ENCODE measurements at regions of chr5 and their contacts with region 1.

Region 1: GRCh38 chr5:14364576-14365472 is 216.8 kb upstream of the OTULINL start:
- DNase-seq: peak in 1 of 2 experiments; percentile 49
- H3K4me3 ChIP-seq: no peak overlapping the region
- H3K4me1 ChIP-seq: no peaks in the 10 kb centered on the region
- H3K27me3 ChIP-seq: no peaks in the 10 kb centered on the region

Region 2: GRCh38 chr5:13946115-13946514 is 418.7 kb before region 1 on chr5:
- in situ Hi-C with region 1: no loop called
- DNase-seq: no peak
- H3K4me3 ChIP-seq: no peak overlapping the region
- H3K4me1 ChIP-seq: no peaks in the 10 kb centered on the region
- H3K27me3 ChIP-seq: no peaks in the 10 kb centered on the region

Region 3: GRCh38 chr5:13987843-13988464 is 376.9 kb before region 1 on chr5:
- in situ Hi-C with region 1: loop called (anchors 10 kb)
- DNase-seq: peak; percentile 61 to 66
- H3K4me3 ChIP-seq: no peak overlapping the region
- H3K4me1 ChIP-seq: no peaks in the 10 kb centered on the region
- H3K27me3 ChIP-seq: peaks cover 13% of the 10 kb centered on the region

Region 4: DNA sequence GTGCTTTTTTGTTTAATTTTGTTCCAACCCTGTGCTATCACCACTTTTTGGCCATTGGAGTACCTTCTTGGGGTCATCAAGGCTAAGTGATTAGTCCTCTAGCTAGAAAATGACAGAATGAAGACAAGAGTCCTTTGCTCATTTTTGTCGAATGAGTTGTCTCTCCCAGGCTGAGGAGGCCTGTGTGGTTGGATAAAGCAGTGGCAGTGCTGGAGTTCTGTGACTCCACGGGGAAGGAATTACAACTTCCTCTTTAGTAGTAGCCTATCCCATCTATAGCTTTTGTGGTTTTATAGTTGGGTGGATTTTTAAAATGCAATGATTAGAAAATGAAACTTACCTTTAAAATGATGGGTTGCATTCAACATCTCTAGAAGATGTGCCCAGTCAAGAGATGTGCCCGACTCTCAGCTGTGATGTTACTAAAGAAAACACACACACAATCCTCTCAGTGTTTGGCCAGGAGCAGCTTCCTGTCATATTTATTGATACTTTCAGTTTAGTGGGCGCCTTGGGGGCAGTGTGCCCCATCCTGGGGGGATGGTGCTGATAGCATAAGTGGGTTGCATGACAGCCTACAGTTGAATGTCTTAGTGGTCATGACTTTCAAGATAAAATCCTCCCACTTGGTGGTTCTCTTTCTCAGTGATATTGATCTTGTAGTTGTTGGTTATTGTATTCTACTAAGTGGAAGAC is 228.7 kb after region 1 on chr5:
- in situ Hi-C with region 1: no loop called
- DNase-seq: no peak
- H3K4me3 ChIP-seq: no peak overlapping the region
- H3K4me1 ChIP-seq: no peaks in the 10 kb centered on the region
- H3K27me3 ChIP-seq: no peaks in the 10 kb centered on the region

Region 5: GRCh38 chr5:14630671-14631070 is 265.8 kb after region 1 on chr5:
- in situ Hi-C with region 1: loop called (anchors 10 kb)
- DNase-seq: no peak
- H3K4me3 ChIP-seq: no peak overlapping the region
- H3K4me1 ChIP-seq: no peaks in the 10 kb centered on the region
- H3K27me3 ChIP-seq: no peaks in the 10 kb centered on the region